A673 (cell line): ENCODE measurements at regions of chr2 and their contacts with region 1.

Region 1: DNA sequence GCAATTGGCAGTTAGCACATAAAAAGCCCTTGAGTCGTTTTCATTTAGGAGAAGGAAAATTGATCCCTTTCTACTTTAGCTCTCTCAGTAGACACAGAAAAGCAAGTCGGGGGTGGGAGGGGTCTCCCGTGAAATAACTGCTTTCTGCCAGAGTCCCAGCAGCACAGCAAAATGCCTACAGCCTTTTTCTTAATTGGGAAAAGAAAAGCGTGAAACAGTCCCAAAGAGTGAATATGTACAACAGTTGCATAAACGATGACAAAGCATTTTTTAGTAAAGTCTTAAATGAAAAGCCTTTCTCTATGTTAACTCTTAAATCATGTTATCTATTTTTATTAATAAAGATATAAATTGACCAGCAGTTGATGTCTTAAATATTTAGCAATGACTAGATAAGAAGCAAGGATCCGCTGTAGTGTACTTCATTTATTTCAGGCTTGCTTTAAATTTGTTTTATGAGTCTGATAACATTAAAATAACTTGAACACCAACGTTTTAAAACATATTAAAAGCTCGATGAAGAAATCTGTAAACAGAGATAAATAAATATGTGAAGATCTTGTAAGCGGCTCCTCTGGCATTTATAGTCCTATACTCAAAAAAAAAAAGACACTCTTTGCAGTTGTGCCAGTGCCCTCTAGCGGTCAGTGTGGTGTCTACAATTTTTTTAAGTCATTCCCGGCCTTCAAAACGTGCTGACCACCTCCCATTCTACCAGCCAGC is 42.3 kb upstream of the ATIC start:
- DNase-seq: peak; percentile 88
- H3K4me3 ChIP-seq: no peak overlapping the region
- H3K27ac ChIP-seq: no peak overlapping the region
- H3K4me1 ChIP-seq: peaks cover 7% of the 10 kb centered on the region
- H3K27me3 ChIP-seq: no peaks in the 10 kb centered on the region
- CTCF ChIP-seq: peak; percentile 92

Region 2: DNA sequence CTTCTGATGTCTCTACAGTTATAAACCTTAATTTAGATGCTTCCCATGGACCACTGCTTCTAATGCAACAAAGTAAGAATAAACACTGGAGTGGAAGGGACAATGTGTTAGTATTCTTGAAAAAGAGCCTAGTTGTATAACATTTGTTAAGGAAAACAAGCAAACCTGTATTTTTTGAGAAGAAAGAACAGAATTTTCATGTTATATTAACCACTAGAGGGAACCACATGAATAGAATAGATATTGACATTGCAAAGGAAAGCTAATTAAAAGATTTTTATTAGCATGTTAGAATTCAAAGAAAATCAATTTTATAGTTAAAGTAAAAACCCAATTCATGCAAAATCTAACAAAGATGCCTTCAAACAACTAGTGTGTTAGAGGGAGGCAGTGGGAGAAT is 308.9 kb before region 1 on chr2:
- CTCF ChIA-PET with region 1: interaction called, 5 read pairs
- POLR2A ChIA-PET with region 1: no interaction called
- intact Hi-C with region 1: loop called (anchors 2 kb)
- DNase-seq: peak; percentile 20
- H3K4me3 ChIP-seq: no peak overlapping the region
- H3K27ac ChIP-seq: no peak overlapping the region
- H3K4me1 ChIP-seq: no peaks in the 10 kb centered on the region
- H3K27me3 ChIP-seq: no peaks in the 10 kb centered on the region
- CTCF ChIP-seq: peak; percentile 58; the same call in 1 of the 2 replicates

Region 3: GRCh38 chr2:215920244-215921100 is 650.9 kb after region 1 on chr2:
- CTCF ChIA-PET with region 1: interaction called, 3 read pairs
- POLR2A ChIA-PET with region 1: no interaction called
- intact Hi-C with region 1: loop called (anchors 5 kb)
- DNase-seq: peak; percentile 89
- H3K4me3 ChIP-seq: no peak overlapping the region
- H3K27ac ChIP-seq: peak overlapping the region; percentile 81
- H3K4me1 ChIP-seq: peaks cover 26% of the 10 kb centered on the region
- H3K27me3 ChIP-seq: no peaks in the 10 kb centered on the region
- CTCF ChIP-seq: peak; percentile 92

Region 4: GRCh38 chr2:217193431-217194340 is 1924.1 kb after region 1 on chr2:
- CTCF ChIA-PET with region 1: no interaction called
- POLR2A ChIA-PET with region 1: no interaction called
- intact Hi-C with region 1: no loop called
- DNase-seq: no peak
- H3K4me3 ChIP-seq: no peak overlapping the region
- H3K27ac ChIP-seq: no peak overlapping the region
- H3K4me1 ChIP-seq: no peaks in the 10 kb centered on the region
- H3K27me3 ChIP-seq: no peaks in the 10 kb centered on the region
- CTCF ChIP-seq: no peak